ENCODE measurements at regions of chr4 and their contacts with region 1.

Region 1: DNA sequence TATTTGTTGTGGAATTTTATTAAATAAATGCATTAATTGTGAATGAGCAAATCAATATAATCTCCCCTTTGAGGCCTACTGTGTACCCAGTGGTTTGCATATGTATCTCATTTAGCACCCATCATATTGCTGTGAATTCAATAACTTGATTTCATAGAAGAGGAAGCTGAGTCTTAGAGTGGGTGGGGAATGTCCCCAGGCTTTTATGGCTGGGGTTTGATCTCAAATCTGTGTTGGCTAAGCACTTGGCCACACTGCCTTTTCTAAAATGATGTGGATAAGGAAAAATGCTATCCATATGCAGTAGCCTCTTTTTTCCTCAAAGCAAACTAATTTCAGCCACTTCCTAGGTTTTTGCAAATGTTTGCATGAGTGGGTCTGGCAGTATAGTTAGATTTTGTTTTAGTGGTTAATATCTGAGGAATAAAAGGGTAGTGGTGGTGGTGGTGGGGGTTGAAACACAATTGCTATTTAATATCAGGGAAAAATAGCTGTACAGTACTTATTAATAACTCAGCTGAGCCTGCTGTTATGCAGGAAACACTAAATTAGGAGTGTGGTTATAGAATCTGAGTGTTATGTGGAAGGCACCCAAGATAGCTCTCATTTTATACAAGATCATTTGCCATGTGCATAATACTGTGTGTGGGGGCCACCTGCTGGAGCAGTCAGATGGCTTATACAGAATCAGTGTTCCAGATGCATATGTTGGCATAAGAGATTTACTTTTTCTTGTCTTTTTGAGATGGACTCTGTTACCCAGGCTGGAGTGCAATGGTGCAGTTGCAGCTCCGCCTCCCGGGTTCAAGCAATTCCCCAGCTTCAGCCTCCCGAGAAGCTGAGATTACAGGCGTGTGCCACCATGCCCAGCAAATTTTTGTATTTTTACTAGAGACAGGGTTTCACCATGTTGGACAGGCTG is 108.0 kb downstream of the TMEM131L start:
- DNase-seq: peak; percentile 80
- ATAC-seq: peak; percentile 81
- H3K4me3 Mint-ChIP-seq: no peak overlapping the region
- H3K27ac Mint-ChIP-seq: peak overlapping the region; percentile 80
- H3K4me1 Mint-ChIP-seq: peaks cover 72% of the 10 kb centered on the region
- H3K27me3 Mint-ChIP-seq: no peaks in the 10 kb centered on the region
- CTCF ChIP-seq: peak; percentile 66

Region 2: GRCh38 chr4:153232768-153233167 is 341.4 kb before region 1 on chr4:
- CTCF ChIA-PET with region 1: no interaction called
- POLR2A ChIA-PET with region 1: no interaction called
- intact Hi-C with region 1: no loop called
- DNase-seq: no peak
- ATAC-seq: peak; percentile 42
- H3K4me3 Mint-ChIP-seq: no peak overlapping the region
- H3K27ac Mint-ChIP-seq: no peak overlapping the region
- H3K4me1 Mint-ChIP-seq: peaks cover 16% of the 10 kb centered on the region
- H3K27me3 Mint-ChIP-seq: peaks cover 7% of the 10 kb centered on the region
- CTCF ChIP-seq: no peak

Region 3: DNA sequence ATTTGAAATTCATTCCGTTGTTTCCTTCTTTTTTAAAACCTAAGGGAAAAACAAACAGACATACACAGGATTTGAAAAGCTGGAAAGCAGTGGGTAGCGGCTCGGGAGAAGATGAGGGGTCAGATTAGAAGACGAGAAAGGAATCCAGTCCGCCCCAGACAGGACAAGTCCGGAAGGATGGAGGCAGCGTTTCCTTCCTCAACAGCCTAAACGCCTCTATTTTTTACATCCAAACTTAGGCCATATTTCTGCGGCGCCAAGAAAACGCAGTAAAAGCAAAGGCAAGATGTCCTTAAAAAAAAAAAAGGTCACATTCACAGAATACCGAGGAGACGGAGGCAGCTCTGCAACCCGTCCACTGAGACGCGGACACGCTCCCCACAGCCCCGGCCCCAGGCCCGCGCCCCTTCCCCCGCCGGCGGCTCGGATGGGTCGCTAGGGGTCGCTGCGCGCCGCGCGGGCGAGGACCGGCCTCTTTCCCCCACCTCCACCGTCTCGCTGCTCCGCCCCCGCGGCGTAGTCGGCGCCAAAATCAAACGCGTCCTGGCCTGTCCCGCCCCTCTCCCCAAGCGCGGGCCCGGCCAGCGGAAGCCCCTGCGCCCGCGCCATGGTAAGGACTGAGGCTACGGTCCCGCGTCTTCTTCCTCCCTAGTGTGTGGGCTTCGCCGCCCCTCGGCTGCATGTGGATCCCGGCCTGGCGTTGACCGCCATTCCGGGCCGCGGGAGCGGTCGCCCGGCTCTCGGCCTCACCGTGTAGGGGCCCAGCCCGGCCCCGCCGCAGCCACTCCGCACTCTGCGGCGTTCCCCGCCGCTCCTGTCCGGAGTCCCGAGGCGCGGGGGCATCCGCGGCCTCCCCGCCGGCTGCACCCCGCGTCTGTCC is 229.8 kb before region 1 on chr4 and contains the start of gene MND1:
- CTCF ChIA-PET with region 1: interaction called, 22 read pairs
- POLR2A ChIA-PET with region 1: no interaction called
- intact Hi-C with region 1: loop called (anchors 2 kb)
- DNase-seq: peak; percentile 94
- ATAC-seq: peak; percentile 94
- H3K4me3 Mint-ChIP-seq: peak within 1 kb of the TSS; percentile 93
- H3K27ac Mint-ChIP-seq: peak within 1 kb of the TSS; percentile 87
- H3K4me1 Mint-ChIP-seq: peaks cover 24% of the 10 kb centered on the region
- H3K27me3 Mint-ChIP-seq: peaks cover 12% of the 10 kb centered on the region
- CTCF ChIP-seq: peak; percentile 100
- total RNA-seq, gene MND1: 48.0 to 50.0 TPM

Region 4: DNA sequence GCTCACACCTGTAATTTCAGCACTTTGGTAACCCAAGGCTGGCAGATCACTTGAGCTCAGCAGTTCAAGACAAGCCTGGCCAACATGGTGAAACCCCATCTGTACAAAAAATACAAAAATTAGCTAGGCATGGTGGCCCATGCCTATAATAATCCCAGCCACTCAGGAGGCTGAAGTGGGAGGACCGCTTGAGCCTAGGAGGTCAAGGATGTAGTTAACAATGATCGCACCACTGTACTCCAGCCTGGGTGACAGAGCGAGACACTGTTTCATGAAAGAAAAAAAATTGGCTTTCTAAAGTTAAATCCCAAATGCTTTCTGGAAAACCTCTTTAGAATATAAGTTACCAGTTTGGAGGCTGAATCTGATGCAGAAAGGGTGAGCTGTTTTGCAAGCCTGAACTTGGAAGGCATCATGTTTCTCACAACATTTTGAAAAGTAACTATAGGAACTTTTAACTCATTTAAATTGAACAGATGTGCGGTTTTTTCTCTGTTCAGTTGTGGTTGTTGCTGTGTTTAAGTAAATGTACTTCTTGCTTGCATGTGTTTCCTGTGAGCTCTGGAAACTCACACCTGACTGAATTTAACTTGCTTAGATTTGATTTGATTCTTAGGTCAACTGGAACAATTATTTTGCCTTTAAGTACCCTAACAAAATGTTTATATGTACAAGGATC is 147.8 kb before region 1 on chr4:
- CTCF ChIA-PET with region 1: interaction called, 20 read pairs
- POLR2A ChIA-PET with region 1: no interaction called
- intact Hi-C with region 1: no loop called
- DNase-seq: no peak
- ATAC-seq: peak; percentile 55
- H3K4me3 Mint-ChIP-seq: no peak overlapping the region
- H3K27ac Mint-ChIP-seq: peak overlapping the region; percentile 80
- H3K4me1 Mint-ChIP-seq: peaks cover 63% of the 10 kb centered on the region
- H3K27me3 Mint-ChIP-seq: no peaks in the 10 kb centered on the region
- CTCF ChIP-seq: no peak

Region 5: DNA sequence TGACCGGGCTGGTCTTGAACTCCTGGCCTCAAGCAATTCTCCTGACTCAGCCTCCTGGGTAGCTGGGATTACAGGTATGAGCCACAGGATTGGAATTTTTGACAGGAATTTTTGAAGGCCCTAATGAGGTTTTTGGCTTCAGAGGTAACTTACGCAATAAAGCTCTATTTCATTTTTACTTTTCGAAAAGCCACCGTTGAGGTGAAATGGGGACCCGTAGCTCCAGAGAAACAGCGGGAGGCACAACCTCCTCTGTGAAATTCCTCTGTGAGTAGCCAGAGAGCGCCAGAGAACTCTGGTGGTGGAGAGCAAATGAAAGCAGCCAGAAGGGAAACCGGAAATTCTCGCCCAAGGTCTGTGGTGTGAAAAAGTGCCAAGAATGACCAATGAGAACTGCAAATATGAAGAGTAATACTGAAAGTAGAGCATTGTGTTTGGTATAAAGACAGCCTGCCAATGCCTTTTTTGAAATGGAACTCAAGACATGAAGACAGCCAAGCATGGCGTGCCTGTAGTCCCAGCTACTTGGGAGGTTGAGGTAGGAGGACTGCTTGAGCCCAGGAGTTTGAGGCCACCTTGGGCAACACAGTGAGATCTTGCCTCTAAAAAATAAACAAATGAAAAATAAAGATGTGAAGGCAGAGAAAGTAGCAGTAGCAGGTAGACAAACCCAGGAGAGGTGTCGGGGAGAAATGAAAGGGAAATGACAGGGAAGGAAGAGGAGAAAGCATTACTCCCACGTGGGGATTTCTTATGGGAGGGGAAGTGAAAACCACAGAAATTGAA is 141.0 kb before region 1 on chr4:
- CTCF ChIA-PET with region 1: interaction called, 40 read pairs
- POLR2A ChIA-PET with region 1: interaction called, 9 read pairs
- intact Hi-C with region 1: loop called (anchors 2 kb)
- DNase-seq: peak; percentile 91
- ATAC-seq: peak; percentile 86
- H3K4me3 Mint-ChIP-seq: peak overlapping the region; percentile 80
- H3K27ac Mint-ChIP-seq: peak overlapping the region; percentile 97
- H3K4me1 Mint-ChIP-seq: peaks cover 72% of the 10 kb centered on the region
- H3K27me3 Mint-ChIP-seq: no peaks in the 10 kb centered on the region
- CTCF ChIP-seq: peak; percentile 82

Region 6: DNA sequence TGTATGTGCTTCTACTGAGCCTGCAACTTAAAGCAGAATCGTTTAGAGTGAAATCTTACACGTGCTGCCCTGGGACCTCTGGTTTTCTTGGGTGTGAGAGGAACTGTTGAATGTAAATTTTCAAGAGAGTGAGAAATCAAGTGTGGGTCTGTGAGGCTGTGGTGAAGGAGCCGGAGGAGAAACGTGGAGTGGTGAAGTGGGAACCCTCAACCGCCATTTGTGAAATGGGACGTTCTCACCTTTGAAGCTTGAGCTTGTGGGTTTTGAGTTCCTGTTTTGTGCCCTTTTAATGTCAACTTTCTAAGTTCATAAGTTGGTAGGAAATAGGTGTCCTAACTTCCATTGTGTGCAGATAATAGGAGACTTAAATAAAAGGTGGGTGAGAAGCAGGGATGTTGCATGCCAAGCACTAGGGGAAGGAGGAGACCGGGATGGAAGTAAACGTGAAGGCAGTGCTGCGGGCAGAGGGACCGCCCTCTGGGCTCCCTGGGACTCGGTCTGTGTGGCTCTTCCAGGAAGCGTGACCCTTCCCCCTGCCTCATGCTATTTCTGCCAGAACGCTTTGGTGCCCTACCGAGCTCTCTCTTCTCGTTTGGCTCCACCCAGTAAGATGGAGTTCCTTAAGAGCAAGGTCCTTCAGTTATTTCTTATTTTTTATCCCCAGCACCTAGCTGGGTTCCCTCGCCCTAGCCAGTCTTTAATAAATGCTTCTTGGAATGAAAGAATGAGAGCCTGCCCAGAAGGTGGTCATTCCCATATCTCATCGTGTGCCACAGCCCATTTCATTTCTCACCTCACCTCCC is 51.9 kb before region 1 on chr4:
- CTCF ChIA-PET with region 1: interaction called, 7 read pairs
- POLR2A ChIA-PET with region 1: interaction called, 4 read pairs
- intact Hi-C with region 1: loop called (anchors 5 kb)
- DNase-seq: peak; percentile 90
- ATAC-seq: peak; percentile 82
- H3K4me3 Mint-ChIP-seq: peak overlapping the region; percentile 66
- H3K27ac Mint-ChIP-seq: peak overlapping the region; percentile 96
- H3K4me1 Mint-ChIP-seq: peaks cover 88% of the 10 kb centered on the region
- H3K27me3 Mint-ChIP-seq: no peaks in the 10 kb centered on the region
- CTCF ChIP-seq: no peak

Region 7: DNA sequence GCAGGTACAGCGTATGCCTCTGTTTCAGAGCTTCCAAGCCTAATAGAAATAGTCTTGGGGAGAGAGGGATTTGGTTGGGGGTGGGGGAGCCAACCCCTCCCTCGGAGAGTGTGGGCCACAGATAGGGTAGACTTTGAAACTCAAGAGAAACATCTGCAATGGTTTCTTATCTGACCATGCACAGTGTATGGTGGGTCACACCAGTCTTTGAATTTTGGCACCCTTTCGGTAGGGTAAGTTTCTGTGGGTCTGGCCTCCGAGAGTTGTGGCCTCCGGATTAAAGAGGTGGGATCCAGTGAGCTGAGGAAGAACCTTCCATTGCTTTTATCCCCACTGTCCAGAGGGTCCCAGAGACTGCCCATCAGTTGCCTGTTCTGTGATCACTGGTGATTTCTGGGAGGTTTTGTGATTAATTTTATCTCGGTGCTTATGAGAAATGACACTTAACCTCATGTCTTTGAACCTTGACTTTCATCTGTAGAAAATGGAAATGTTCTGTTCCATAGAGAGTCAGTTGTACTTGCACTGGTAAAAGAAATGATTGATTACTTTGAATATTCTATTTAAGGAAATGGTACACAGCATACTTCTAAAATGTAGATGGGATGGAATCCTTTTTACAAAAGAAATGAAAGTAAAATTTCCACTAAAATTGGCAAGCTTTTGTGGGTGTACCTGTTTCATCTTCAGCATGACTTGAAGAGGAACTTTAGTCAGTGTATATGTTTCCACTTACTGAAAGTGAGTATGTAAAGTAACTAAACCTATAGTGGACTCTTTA is 45.2 kb before region 1 on chr4:
- CTCF ChIA-PET with region 1: interaction called, 16 read pairs
- POLR2A ChIA-PET with region 1: interaction called, 4 read pairs
- intact Hi-C with region 1: loop called (anchors 5 kb)
- DNase-seq: no peak
- ATAC-seq: peak; percentile 73
- H3K4me3 Mint-ChIP-seq: peak overlapping the region; percentile 50
- H3K27ac Mint-ChIP-seq: peak overlapping the region; percentile 96
- H3K4me1 Mint-ChIP-seq: peaks cover 87% of the 10 kb centered on the region
- H3K27me3 Mint-ChIP-seq: no peaks in the 10 kb centered on the region
- CTCF ChIP-seq: no peak

Region 8: GRCh38 chr4:153541456-153542096 is 32.6 kb before region 1 on chr4:
- CTCF ChIA-PET with region 1: interaction called, 11 read pairs
- POLR2A ChIA-PET with region 1: no interaction called
- intact Hi-C with region 1: no loop called
- DNase-seq: peak; percentile 39
- ATAC-seq: peak; percentile 75
- H3K4me3 Mint-ChIP-seq: no peak overlapping the region
- H3K27ac Mint-ChIP-seq: peak overlapping the region; percentile 71
- H3K4me1 Mint-ChIP-seq: peaks cover 71% of the 10 kb centered on the region
- H3K27me3 Mint-ChIP-seq: no peaks in the 10 kb centered on the region
- CTCF ChIP-seq: no peak

Region 9: DNA sequence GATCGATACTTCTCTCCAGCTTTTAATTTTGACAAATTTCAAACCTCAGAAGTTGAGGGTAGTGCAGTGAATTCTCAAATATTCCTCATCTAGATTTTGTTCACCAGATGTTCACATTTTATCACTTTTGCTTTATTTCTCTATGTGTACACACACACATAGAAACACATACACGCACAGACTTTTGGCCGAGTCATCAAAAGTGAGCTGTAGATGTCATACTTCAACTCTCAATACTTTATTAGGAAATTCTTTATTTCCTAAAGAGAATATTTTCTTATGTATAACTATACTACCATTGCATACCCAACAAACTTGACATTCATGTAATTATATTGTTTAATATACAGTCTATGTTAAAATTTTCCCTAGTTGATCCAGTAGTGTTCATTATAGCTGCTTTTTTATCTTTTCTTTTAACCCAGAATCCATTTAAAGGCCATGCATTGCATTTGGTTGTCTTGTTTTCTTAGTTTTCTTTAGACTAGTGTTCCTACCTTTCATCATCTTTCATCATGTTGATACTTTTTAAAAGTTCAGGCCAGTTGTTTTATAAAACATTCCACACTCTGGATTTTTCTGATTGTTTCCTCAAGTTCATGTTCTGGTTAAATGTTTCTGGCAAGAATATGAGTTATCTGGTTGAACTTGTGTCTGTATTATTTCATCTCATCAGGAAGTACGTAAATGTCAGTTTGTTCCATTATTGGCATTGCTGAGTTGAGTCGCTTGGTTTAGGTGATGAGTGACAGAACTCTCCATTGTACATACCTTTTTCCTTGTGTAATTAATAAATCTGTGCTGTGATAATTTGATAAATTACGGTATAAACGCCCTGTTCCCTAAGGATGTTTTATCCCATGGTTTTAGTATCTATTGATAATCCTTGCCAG is 15.8 kb after region 1 on chr4:
- CTCF ChIA-PET with region 1: no interaction called
- POLR2A ChIA-PET with region 1: no interaction called
- intact Hi-C with region 1: no loop called
- DNase-seq: no peak
- ATAC-seq: no peak
- H3K4me3 Mint-ChIP-seq: no peak overlapping the region
- H3K27ac Mint-ChIP-seq: peak overlapping the region; percentile 4
- H3K4me1 Mint-ChIP-seq: peaks cover 9% of the 10 kb centered on the region
- H3K27me3 Mint-ChIP-seq: no peaks in the 10 kb centered on the region
- CTCF ChIP-seq: no peak

Measured in activated CD8-positive, alpha-beta T cell treated with anti-CD3 and anti-CD28 coated beads for 36 hours (primary cell).